ENCODE measurements at regions of chr12 and their contacts with region 1.

Region 1: GRCh38 chr12:2682296-2683251 is 112.2 kb upstream of the FKBP4 start:
- DNase-seq: no peak
- H3K4me3 ChIP-seq: no peak overlapping the region
- H3K27ac ChIP-seq: no peak overlapping the region
- H3K4me1 ChIP-seq: no peaks in the 10 kb centered on the region
- H3K27me3 ChIP-seq: no peaks in the 10 kb centered on the region
- CTCF ChIP-seq: peak in 1 of 2 experiments; percentile 13

Region 2: DNA sequence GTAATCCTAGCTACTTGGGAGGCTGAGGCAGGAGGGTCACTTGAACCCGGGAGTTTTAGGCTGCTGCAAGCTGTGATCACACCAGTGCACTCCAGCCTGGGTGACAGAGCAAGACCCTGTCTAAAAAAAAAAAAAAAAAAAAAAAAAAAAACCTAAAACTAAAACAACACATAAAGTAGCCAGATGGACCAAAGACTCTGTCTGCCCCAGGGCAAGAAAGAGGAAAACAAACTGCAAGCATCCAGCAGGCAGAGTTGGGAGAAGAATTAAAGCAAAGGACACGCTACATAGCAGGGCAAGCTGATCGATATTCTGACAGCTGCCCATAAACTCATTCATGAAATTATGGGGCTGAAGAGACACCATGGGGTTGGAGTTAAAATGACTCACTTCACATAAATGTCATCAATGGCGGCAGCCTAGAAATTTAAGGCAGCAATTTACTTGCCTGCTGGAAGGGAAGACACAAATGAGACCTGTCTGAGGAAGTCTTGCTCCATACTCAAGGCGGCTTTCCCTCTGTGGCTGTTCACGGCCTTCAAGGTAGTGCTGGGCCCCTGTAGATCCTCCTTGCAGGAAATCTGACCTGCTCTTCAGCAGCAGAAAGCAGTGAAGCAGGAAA is 146.9 kb before region 1 on chr12:
- intact Hi-C with region 1: no loop called
- DNase-seq: no peak
- H3K4me3 ChIP-seq: no peak overlapping the region
- H3K27ac ChIP-seq: no peak overlapping the region
- H3K4me1 ChIP-seq: no peaks in the 10 kb centered on the region
- H3K27me3 ChIP-seq: no peaks in the 10 kb centered on the region
- CTCF ChIP-seq: no peak

Region 3: GRCh38 chr12:2779281-2779680 is 96.7 kb after region 1 on chr12:
- intact Hi-C with region 1: loop called (anchors 10 kb)
- DNase-seq: no peak
- H3K4me3 ChIP-seq: no peak overlapping the region
- H3K27ac ChIP-seq: no peak overlapping the region
- H3K4me1 ChIP-seq: peaks cover 0 to 10% (median 7%) of the 10 kb centered on the region in 4 donors
- H3K27me3 ChIP-seq: peaks cover 0 to 12% of the 10 kb centered on the region in 2 donors
- CTCF ChIP-seq: no peak

Region 4: DNA sequence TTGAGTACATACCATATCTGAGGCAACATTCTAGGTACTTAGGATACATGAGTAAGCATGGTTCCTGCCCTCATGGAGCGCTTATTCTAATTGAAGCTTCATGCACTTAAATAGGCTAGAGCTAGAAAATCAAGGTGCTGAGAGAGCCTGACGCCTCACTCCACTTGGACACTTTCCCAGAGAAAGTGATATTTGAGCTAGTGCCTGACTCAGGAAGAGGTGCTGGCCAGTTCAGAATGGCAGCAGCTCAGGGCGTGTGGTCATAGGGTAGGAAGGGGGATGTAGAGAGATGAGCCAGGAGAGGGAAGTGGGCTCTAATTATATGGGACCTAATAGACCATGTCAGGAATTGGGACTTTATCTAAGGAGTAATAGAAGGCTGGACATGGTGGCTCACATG is 241.4 kb after region 1 on chr12:
- intact Hi-C with region 1: no loop called
- DNase-seq: peak in 1 of 2 donors; percentile 12
- H3K4me3 ChIP-seq: no peak overlapping the region
- H3K27ac ChIP-seq: no peak overlapping the region
- H3K4me1 ChIP-seq: no peaks in the 10 kb centered on the region
- H3K27me3 ChIP-seq: no peaks in the 10 kb centered on the region
- CTCF ChIP-seq: no peak